ENCODE measurements at regions of chr12 and their contacts with region 1.

Region 1: DNA sequence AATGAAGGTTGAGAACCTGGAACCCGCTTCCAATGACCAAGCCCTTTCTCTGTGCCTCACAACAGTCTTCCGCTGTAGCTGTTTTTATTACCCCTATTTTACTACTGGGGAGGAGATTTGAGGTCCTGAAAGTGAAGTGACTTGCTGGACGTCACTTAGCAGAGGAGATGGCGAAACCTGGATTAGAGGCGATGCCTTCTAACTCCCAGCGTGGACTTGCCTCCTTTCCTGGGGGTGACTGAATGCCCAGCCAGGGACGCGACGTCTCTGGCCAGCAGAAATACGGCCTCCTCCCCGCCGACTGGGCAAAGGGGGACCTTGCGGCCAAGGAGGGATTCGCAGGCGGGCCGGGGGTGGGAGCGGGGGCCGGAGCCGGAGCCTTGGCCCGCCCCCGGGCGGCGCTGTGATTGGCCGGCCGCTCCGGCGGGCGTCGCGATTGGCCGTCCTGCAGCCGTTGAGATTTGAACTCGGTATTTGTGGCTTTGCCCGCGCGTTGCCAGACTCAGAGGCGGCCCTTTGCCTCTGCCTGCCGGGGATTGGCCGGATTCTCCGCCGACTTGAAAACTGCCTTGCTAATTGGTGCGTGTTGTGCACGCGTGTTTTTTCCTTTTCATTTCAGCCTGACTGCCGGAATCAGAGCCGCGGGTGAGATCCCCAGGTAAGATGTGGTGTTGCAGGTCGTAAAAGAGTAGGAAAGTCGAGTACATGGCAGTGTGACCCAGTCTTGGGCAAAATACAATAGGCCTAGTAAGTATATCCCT is at the start of gene NCAPD2:
- DNase-seq: peak; percentile 88 to 98 (median 94)
- ATAC-seq: peak; percentile 80
- H3K4me3 ChIP-seq: peak within 1 kb of the TSS; percentile 86 to 93
- H3K4me3 Mint-ChIP-seq: peak within 1 kb of the TSS; percentile 96
- H3K27ac ChIP-seq: peak within 1 kb of the TSS; percentile 72 to 93
- H3K27ac Mint-ChIP-seq: peak within 1 kb of the TSS; percentile 98
- H3K4me1 ChIP-seq: peaks cover 26% of the 10 kb centered on the region
- H3K4me1 Mint-ChIP-seq: peaks cover 41% of the 10 kb centered on the region
- H3K27me3 ChIP-seq: no peaks in the 10 kb centered on the region
- H3K27me3 Mint-ChIP-seq: no peaks in the 10 kb centered on the region
- CTCF ChIP-seq: no peak
- total RNA-seq, gene NCAPD2: 11.7 to 13.4 TPM

Region 2: DNA sequence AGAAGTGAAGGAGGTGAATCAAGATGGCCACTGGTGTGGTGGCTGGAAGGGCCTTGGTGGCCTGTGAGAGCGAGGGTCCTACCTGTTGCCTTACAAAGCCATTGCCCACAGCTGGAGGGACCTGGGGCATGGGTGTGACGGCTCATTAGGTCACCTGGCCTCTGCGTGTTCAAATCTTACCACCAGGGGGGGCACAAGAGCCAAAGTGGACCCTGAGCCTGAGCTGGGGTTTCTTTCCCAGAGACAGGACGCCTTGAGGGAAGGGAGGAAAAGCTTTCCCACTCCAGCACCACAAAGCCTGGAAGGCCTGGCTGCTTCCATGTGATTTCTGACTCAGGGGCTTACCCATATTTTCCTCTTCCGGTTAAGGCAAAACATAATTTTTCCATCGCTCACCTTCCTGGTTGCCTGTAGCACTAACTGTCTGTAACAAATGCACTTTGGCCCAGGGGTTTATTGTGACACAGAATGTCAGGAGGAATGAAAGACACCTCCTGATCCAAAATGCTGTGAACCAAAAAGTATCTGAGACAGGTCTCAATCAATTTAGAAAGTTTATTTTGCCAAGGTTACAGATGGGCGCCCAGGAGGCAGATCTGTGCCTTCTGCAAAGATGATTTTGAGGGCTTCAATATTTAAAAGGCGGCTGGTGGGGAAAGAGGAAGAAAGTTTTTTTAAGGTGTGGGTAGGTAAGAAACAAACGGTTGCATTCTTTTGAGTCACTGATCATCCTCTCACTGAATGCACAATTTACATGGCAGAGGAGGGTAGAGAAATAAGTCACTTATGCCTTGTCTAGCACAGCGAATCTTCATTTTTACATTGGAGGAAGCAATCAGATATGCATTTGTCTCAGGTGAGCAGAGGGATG is 297.8 kb before region 1 on chr12:
- CTCF ChIA-PET with region 1: no interaction called
- POLR2A ChIA-PET with region 1: no interaction called
- intact Hi-C with region 1: no loop called
- DNase-seq: peak; percentile 53 to 87 (median 75)
- ATAC-seq: peak; percentile 80
- H3K4me3 ChIP-seq: no peak overlapping the region
- H3K4me3 Mint-ChIP-seq: no peak overlapping the region
- H3K27ac ChIP-seq: no peak overlapping the region
- H3K27ac Mint-ChIP-seq: no peak overlapping the region
- H3K4me1 ChIP-seq: peaks cover 8% of the 10 kb centered on the region
- H3K4me1 Mint-ChIP-seq: peaks cover 19% of the 10 kb centered on the region
- H3K27me3 ChIP-seq: peaks cover 0 to 6% of the 10 kb centered on the region in 2 experiments
- H3K27me3 Mint-ChIP-seq: no peaks in the 10 kb centered on the region
- CTCF ChIP-seq: peak; percentile 69

Region 3: GRCh38 chr12:6233121-6233971 is 260.3 kb before region 1 on chr12:
- CTCF ChIA-PET with region 1: no interaction called
- POLR2A ChIA-PET with region 1: no interaction called
- intact Hi-C with region 1: no loop called
- DNase-seq: peak in 1 of 9 experiments; percentile 36
- ATAC-seq: no peak
- H3K4me3 ChIP-seq: no peak overlapping the region
- H3K4me3 Mint-ChIP-seq: no peak overlapping the region
- H3K27ac ChIP-seq: no peak overlapping the region
- H3K27ac Mint-ChIP-seq: no peak overlapping the region
- H3K4me1 ChIP-seq: peaks cover 33% of the 10 kb centered on the region
- H3K4me1 Mint-ChIP-seq: peaks cover 34% of the 10 kb centered on the region
- H3K27me3 ChIP-seq: no peaks in the 10 kb centered on the region
- H3K27me3 Mint-ChIP-seq: no peaks in the 10 kb centered on the region
- CTCF ChIP-seq: no peak

Region 4: GRCh38 chr12:6451348-6452244 is 42.1 kb before region 1 on chr12 and contains the start of gene TAPBPL:
- CTCF ChIA-PET with region 1: interaction called, 3 read pairs
- POLR2A ChIA-PET with region 1: interaction called, 8 read pairs
- intact Hi-C with region 1: loop called in 1 of 2 experiments (anchors 5 kb)
- DNase-seq: peak; percentile 50 to 96 (median 79)
- ATAC-seq: peak; percentile 88
- H3K4me3 ChIP-seq: peak within 1 kb of the TSS; percentile 68 to 82
- H3K4me3 Mint-ChIP-seq: peak within 1 kb of the TSS; percentile 99
- H3K27ac ChIP-seq: peak within 1 kb of the TSS; percentile 85 to 95
- H3K27ac Mint-ChIP-seq: peak within 1 kb of the TSS; percentile 99
- H3K4me1 ChIP-seq: peaks cover 63% of the 10 kb centered on the region
- H3K4me1 Mint-ChIP-seq: peaks cover 82% of the 10 kb centered on the region
- H3K27me3 ChIP-seq: no peaks in the 10 kb centered on the region
- H3K27me3 Mint-ChIP-seq: no peaks in the 10 kb centered on the region
- CTCF ChIP-seq: no peak
- total RNA-seq, gene TAPBPL: 11.8 to 12.2 TPM

Region 5: GRCh38 chr12:6554168-6555017 is 60.7 kb after region 1 on chr12:
- CTCF ChIA-PET with region 1: interaction called, 3 read pairs
- POLR2A ChIA-PET with region 1: no interaction called
- intact Hi-C with region 1: loop called in 1 of 2 experiments (anchors 1 kb)
- DNase-seq: peak; percentile 55 to 81 (median 71)
- ATAC-seq: peak; percentile 61
- H3K4me3 ChIP-seq: peak overlapping the region; percentile 70 to 96
- H3K4me3 Mint-ChIP-seq: peak overlapping the region; percentile 87
- H3K27ac ChIP-seq: no peak overlapping the region
- H3K27ac Mint-ChIP-seq: peak overlapping the region; percentile 58
- H3K4me1 ChIP-seq: peaks cover 35% of the 10 kb centered on the region
- H3K4me1 Mint-ChIP-seq: peaks cover 49% of the 10 kb centered on the region
- H3K27me3 ChIP-seq: no peaks in the 10 kb centered on the region
- H3K27me3 Mint-ChIP-seq: no peaks in the 10 kb centered on the region
- CTCF ChIP-seq: peak; percentile 50

Measured in CD8-positive, alpha-beta T cell (primary cell).